Posterior vena cava (tissue), 2 donors: ENCODE measurements at regions of chr11 and their contacts with region 1.

Region 1: GRCh38 chr11:133134314-133135173 is 397.8 kb downstream of the OPCML start:
- DNase-seq: no peak

Region 2: DNA sequence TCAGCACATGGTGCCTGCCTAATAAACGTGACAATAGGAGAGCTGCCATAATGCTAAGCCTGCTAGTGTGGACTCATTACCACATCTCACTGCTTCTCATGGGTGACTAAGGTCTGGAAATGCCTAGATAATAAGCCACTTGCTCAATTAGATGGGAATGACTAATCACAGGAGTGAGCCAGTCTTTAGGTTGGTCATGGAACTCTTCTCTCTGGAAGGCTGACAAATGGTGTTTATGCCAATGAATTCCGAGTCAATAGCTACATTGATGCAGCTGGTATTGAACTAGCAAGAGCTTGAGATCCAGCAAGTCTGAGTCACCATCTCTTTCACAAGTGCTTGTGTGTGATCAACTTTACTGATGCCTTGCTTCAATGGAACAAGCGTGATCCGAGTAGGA is 62.9 kb after region 1 on chr11:
- intact Hi-C with region 1: loop called in 1 of 2 experiments (anchors 2 kb)
- DNase-seq: no peak

Region 3: DNA sequence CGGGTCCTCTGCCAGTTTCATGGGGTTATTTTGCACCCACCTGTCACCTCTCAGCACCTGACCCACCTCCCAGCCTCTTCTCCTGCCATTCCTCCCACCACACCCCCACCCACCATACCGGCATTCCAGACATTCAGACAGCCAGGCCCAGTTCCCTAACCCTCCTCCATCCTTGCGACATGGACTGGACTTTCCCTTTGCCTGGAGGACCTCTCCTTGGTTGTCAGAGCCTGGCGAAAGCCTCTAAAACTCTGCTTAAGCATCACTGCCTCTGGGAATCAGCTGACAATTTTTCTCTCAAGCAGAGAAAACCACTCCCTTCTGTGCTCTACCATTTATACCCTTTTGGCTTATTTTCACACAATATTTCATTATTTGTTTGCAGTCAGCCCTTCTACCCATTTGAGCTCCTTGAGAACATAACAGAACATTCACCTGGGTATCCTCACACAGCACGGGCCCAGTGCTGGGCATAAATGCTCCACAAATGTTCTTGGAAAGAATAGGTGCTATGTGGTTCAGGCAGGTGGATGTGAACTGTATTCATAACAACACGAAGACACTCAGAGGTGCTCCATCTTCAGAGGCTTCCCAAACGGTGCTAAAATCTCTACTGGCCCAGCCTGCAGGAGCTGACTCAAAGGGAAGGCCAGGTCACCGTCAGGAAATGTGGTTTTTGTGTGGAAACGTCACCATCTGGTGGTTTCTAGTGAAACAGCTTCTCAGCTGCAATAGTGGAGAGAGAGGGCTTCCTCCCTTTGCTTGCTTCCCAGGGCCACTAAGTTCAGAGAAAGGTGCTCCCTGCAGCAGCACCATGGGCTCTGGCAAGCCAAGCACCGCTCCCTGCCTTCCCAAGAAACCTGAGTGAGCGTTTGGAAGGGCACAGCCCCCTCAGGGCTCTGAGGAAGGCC is 700.4 kb after region 1 on chr11:
- intact Hi-C with region 1: loop called (anchors 5 to 10 kb)
- DNase-seq: no peak